Dendritic cell treated with granulocyte-macrophage colony-stimulating factor and Interleukin-4, amounts not matched to agents 40 ng/mL and 50 ng/mL, for 4 days (primary cell): ENCODE measurements at regions of chr11 and their contacts with region 1.

Region 1: GRCh38 chr11:65817835-65818742 is 15.7 kb upstream of the SNX32 start:
- H3K4me3 Mint-ChIP-seq: peak overlapping the region; percentile 78
- H3K27ac Mint-ChIP-seq: peak overlapping the region; percentile 77
- H3K4me1 Mint-ChIP-seq: peaks cover 47% of the 10 kb centered on the region
- H3K27me3 Mint-ChIP-seq: peaks cover 7% of the 10 kb centered on the region

Region 2: GRCh38 chr11:65779851-65780577 is 38.1 kb before region 1 on chr11:
- intact Hi-C with region 1: loop called (anchors 1 kb)
- H3K4me3 Mint-ChIP-seq: peak overlapping the region; percentile 98
- H3K27ac Mint-ChIP-seq: peak overlapping the region; percentile 96
- H3K4me1 Mint-ChIP-seq: peaks cover 52% of the 10 kb centered on the region
- H3K27me3 Mint-ChIP-seq: peaks cover 35% of the 10 kb centered on the region